Dorsolateral prefrontal cortex (tissue), 120 donors: ENCODE measurements at regions of chr3 and their contacts with region 1.

Region 1: DNA sequence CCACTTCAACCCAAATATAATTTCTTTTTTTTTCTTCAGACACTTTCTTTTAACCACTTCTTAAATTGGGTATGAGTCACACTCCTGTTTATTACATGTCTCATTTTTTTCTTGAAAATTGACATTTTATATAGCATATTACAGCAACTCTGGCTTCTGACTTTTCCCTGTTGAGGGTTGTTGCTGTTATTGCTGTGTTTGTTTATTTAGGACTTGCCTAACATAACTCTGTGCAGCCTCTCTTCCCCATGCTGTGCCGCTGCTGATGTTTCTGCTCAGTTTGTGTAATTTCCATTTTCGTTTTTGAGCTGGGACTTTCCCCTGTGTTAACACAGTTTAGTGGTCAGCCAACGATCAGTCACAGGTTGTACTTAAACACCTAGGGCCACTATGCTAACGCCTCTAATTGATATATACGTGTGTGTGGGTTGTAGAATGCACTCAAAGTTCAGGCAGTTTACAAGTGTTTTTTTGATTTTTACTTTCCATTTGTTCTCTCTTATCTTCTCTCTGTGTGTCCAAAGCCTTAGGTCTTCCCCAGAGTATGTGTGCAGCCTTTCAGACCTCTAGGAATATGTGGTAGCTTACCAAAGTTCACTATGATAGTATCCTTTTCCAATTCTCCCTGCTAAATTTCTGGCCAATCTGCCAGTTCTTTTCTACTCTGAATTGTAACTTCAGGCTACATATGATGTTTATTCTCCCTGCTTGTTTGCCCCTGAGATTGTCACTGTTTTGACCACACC is 337.2 kb downstream of the ZBTB20 start:
- DNase-seq: no peak
- H3K4me3 ChIP-seq: no peak overlapping the region
- H3K27ac ChIP-seq: no peak overlapping the region
- H3K27me3 ChIP-seq: no peaks in the 10 kb centered on the region
- CTCF ChIP-seq: no peak

Region 2: DNA sequence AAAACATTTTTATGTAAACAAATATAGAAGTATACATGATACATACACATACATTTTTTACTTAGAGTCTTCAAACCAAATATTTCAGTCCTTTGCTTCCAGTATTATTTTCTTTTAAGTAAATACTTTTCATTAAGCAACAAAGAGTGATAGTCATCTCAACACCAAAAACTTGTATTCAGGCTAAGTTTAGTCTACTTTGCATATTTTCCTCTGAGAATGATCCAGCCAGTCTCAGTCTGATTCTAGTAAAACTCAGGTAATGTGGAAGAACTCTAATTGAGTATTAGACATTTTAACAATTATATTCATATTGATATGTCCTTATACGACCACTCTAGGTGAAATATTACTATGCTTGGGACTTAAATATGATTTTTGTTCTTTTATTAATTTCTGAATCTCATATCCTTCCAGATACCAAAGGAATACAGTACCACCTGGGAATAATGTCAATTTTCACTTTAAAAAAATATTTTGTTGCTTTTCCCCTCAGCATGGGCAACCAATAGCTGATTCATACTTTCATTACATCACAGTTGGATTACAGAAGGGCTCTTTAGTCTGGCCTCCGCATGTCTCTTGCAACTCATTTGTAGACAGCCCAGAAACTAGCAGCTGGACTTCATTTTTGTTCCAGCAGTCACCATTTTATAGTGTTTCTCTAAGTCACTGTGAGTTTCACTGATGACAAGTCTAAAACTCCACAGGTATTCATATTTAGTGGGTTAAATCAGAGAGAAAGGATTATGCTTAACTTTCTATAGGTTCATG is 53.1 kb before region 1 on chr3:
- intact Hi-C with region 1: loop called in 1 of 2 experiments (anchors 10 kb)
- DNase-seq: no peak
- H3K4me3 ChIP-seq: peak overlapping the region in 27 of 59 donors; percentile 1 to 64 (median 12)
- H3K27ac ChIP-seq: peak overlapping the region in 8 of 59 donors; percentile 2 to 49 (median 38)
- H3K27me3 ChIP-seq: no peaks in the 10 kb centered on the region
- CTCF ChIP-seq: peak in 1 of 56 donors; percentile 10